ENCODE measurements at regions of chr4 and their contacts with region 1.

Region 1: DNA sequence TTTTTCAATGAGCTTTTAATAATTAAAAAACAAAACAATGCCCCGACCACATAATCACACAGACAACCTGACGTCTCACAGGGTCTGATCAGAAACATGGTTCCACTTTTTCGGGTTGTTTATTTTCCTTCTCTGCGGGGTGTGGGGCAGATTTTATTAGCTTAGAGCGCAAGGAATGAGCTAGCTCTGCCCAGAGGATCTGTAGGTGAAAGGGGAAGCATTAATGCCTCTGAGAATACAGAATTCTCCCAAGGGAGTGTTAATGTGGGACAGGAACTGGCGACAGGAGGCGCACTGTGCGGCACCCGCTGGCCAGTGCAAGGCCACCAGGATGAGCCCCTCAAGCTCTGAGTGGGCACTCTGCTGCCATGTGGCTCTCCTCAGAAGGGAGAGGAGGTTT is 181.5 kb downstream of the TSPAN5 start:
- DNase-seq: no peak
- H3K4me3 ChIP-seq: no peak overlapping the region
- H3K27ac ChIP-seq: no peak overlapping the region
- H3K27me3 ChIP-seq: no peaks in the 10 kb centered on the region
- CTCF ChIP-seq: no peak

Region 2: GRCh38 chr4:98527534-98528269 is 50.8 kb after region 1 on chr4:
- CTCF ChIA-PET with region 1: no interaction called
- POLR2A ChIA-PET with region 1: no interaction called
- DNase-seq: no peak
- H3K4me3 ChIP-seq: no peak overlapping the region
- H3K27ac ChIP-seq: no peak overlapping the region
- H3K27me3 ChIP-seq: no peaks in the 10 kb centered on the region
- CTCF ChIP-seq: no peak

Region 3: DNA sequence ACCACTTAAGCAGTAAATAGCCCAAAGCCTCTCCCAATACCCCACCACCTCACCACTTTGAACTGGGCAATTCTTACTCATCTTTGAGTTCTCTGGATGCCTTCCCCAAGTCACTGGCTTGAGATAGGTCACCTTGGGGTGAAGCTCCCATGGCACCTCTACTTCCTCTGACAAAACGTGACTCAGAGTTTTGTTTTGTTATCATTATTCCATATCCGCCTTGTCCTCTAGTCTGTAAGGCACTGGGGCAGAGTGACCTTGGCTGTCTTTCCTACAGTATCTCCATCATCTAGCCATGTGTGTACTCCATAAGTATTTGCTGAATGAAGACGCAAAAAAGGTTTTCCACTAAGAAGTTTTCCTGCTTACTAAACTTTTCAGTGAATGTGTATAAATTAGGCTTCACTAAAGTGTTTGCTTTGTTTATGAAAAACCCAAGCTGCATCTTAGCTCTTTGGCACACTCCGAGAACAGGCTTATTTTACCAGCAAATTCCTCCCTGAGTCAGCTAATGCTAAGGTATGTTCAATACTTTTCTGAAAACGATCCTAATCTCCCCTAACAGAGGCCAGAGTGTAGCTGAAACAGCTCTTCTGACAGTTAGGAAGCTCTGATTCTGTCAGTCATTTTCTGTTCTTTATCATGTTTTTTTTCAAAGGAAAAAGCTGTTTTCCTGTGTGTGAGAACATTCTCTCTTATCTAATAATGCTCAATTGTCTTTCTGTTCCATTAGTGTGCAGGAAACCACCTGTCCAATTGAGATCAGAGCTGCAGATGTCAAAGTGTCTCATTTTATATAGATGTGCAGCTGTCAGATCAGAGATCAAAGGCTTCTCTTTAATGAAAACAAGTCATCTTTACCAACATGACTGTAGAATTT is 211.8 kb after region 1 on chr4:
- CTCF ChIA-PET with region 1: no interaction called
- POLR2A ChIA-PET with region 1: interaction called, 10 read pairs
- DNase-seq: peak; percentile 43
- H3K4me3 ChIP-seq: no peak overlapping the region
- H3K27ac ChIP-seq: peak overlapping the region; percentile 49
- H3K27me3 ChIP-seq: no peaks in the 10 kb centered on the region
- CTCF ChIP-seq: no peak

Measured in AG04450 (cell line).